ENCODE measurements at regions of chr7 and their contacts with region 1.

Region 1: GRCh38 chr7:142782922-142783900 is 12.4 kb downstream of the PRSS2 start:
- DNase-seq: peak; percentile 96 to 97 (median 96)
- ATAC-seq: peak; percentile 96
- H3K4me3 ChIP-seq: peak overlapping the region in 1 of 2 donors; percentile 16
- H3K27ac ChIP-seq: peak overlapping the region in 1 of 4 donors; percentile 34
- H3K4me1 ChIP-seq: peaks cover 9% of the 10 kb centered on the region
- H3K27me3 ChIP-seq: no peaks in the 10 kb centered on the region
- CTCF ChIP-seq: peak; percentile 92 to 100 (median 100)
- POLR2A ChIP-seq: no peak

Region 2: DNA sequence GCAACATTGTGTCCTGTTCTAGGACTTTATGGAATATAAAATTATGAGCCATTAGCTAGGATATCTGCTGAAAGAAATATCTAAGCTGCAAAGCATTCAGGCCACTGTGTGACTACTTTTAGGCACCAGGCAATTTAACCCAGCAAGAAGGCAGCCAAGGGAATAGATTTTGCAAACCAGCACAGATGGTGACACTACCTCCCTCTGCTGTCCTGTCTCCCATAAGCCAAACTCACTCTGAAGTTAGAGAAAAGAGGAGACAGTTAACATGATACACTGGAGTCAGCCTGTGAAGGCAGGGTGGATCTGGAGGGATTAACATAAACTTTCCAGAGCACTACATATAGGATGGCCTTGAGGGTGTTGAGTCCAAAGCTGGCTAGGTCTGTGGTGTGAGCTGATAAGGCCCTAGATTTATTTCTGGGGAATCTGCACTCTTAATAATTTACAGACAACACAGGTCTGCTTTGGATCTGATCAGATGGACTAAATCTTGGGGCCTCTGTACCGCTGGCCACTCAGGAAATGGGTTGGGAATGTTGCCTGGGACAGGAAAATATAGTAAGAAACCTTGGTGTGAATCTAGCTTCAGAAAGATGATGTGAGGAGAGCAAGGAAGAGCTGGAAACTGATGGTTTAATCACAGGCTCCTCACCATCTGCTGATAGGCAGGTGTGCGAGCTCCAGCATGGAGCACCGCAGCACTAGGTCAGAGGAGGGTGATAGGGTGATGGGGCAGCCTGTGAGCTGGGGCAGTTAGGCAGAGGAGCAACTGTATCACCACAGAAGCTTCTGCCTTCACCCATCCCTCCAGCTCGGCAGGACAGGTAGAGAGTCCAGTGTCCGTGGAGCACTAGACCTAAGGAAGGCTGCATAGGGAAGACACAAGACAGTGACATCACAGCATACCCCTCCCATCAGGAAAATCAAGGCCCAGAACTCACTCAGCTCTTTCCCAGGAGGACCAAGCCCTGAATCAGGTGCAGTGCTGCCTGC is 263.8 kb before region 1 on chr7:
- intact Hi-C with region 1: loop called (anchors 10 kb)
- DNase-seq: no peak
- ATAC-seq: no peak
- H3K4me3 ChIP-seq: no peak overlapping the region
- H3K27ac ChIP-seq: peak overlapping the region in 3 of 4 donors; percentile 30 to 60 (median 37)
- H3K4me1 ChIP-seq: peaks cover 31% of the 10 kb centered on the region
- H3K27me3 ChIP-seq: no peaks in the 10 kb centered on the region
- CTCF ChIP-seq: no peak
- POLR2A ChIP-seq: no peak

Region 3: DNA sequence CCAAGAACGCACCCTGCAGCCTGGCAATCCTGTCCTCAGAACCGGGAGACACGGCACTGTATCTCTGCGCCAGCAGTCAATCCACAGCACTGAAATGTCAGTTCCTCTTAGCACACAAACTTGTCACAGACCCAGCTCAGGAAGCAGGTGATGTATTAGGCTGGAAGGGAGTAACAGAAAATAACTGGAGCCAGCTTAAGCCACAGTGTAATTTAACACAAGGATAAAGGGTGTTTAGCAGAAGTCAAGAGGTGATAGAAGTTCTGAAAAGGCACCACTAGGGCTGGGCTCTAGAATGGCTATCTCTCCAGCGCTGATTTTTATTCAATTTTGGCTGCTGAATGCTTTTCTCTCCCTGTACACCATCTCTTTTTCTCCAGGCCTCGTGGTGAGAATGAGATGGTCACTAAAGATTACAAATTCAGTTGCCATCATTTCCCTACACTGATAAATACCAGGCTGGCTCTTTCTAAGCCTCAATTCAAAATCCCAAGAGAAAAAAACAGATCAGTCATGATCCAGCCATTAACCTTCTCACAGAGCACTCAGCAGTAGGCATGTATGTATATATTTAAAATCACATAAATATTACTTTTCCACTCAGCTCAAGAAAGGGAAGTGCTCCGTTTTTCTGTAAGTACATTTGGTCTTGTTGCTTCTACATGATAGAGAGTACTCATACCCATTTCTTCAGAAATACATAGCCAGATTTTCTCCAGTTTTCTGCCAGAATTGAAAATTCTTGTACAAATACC is 136.6 kb before region 1 on chr7:
- intact Hi-C with region 1: loop called (anchors 10 kb)
- DNase-seq: no peak
- ATAC-seq: peak; percentile 63
- H3K4me3 ChIP-seq: no peak overlapping the region
- H3K27ac ChIP-seq: peak overlapping the region in 2 of 4 donors; percentile 35 to 52
- H3K4me1 ChIP-seq: peaks cover 31% of the 10 kb centered on the region
- H3K27me3 ChIP-seq: no peaks in the 10 kb centered on the region
- CTCF ChIP-seq: peak in 2 of 7 experiments; percentile 6 to 9
- POLR2A ChIP-seq: no peak

Region 4: DNA sequence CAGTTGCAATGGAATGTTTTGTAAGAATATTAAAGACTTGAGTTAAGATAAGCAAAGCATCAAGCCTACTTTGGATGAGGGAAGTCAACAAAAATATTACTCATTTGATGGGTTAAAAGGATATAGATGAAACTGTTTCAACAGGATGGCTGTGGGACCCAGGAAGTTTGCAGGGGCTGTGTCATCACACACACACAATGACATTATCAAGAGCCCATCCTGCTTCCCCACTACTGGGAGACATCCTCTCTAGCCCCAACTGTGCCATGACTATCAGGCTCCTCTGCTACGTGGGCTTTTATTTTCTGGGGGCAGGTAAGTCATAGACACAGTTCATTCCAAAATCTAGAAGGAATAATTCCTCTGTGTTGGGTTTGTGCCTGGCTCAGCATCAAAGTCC is 112.7 kb before region 1 on chr7:
- intact Hi-C with region 1: loop called (anchors 10 kb)
- DNase-seq: no peak
- ATAC-seq: no peak
- H3K4me3 ChIP-seq: no peak overlapping the region
- H3K27ac ChIP-seq: peak overlapping the region in 1 of 4 donors; percentile 35
- H3K4me1 ChIP-seq: peaks cover 29% of the 10 kb centered on the region
- H3K27me3 ChIP-seq: no peaks in the 10 kb centered on the region
- CTCF ChIP-seq: no peak
- POLR2A ChIP-seq: no peak

Measured in body of pancreas (tissue), 4 donors.